ENCODE measurements at regions of chr11 and their contacts with region 1.

Region 1: GRCh38 chr11:130861902-130862860 is 54.1 kb downstream of the SNX19 start:
- DNase-seq: peak; percentile 84
- H3K4me3 ChIP-seq: no peak overlapping the region
- H3K27ac ChIP-seq: no peak overlapping the region
- H3K4me1 ChIP-seq: no peaks in the 10 kb centered on the region
- H3K27me3 ChIP-seq: no peaks in the 10 kb centered on the region
- CTCF ChIP-seq: peak; percentile 100
- POLR2A ChIP-seq: no peak

Region 2: DNA sequence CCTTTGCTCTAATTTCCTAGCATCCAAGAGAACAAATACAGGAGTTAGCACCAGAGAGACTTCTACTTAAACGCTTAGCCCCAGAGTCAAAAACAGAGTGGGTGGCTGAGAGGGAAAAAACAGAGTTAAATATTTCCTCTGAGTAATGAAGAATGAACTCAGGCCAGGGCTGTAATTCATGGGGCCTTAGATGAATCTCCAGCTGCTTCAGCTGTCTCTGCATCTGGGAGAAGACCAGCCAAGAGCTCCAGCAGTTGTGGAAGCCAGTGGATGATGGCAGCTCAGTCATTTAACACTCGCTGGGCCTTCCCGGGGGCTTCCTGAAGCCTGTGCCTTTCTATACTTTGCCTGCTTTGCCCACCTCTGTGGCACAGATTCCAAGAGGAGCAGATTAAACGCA is 419.4 kb before region 1 on chr11:
- CTCF ChIA-PET with region 1: interaction called, 464 read pairs
- POLR2A ChIA-PET with region 1: no interaction called
- dilution Hi-C with region 1: loop called (anchors 25 kb)
- intact Hi-C with region 1: no loop called
- DNase-seq: no peak
- H3K4me3 ChIP-seq: no peak overlapping the region
- H3K27ac ChIP-seq: no peak overlapping the region
- H3K4me1 ChIP-seq: no peaks in the 10 kb centered on the region
- H3K27me3 ChIP-seq: peaks cover 0 to 3% of the 10 kb centered on the region in 2 experiments
- CTCF ChIP-seq: no peak
- POLR2A ChIP-seq: no peak

Region 3: GRCh38 chr11:130480711-130481140 is 381.5 kb before region 1 on chr11:
- CTCF ChIA-PET with region 1: interaction called, 3 read pairs
- POLR2A ChIA-PET with region 1: no interaction called
- dilution Hi-C with region 1: no loop called
- intact Hi-C with region 1: loop called (anchors 5 kb)
- DNase-seq: peak; percentile 80
- H3K4me3 ChIP-seq: no peak overlapping the region
- H3K27ac ChIP-seq: no peak overlapping the region
- H3K4me1 ChIP-seq: peaks cover 28% of the 10 kb centered on the region
- H3K27me3 ChIP-seq: peaks cover 23 to 38% of the 10 kb centered on the region in 2 experiments
- CTCF ChIP-seq: no peak
- POLR2A ChIP-seq: no peak

Region 4: DNA sequence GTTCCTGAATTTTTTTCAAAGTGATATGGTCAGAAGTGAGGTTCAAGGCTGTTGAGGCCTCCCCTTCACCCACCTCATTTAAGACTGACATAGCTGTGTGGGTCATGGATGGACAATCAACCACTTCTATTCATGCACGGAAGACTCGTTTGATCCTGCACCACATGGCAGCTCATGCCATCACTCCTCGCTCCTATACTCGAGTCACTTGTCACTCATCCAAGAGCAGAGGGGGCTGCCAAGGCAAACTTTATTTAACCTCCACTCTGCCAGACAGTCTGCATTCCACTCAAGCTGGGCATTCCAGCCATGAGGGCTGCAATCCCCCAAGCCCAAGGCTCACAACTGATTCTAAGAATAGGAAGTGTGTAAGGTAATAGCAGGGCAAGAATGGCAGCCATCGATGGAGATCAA is 20.0 kb after region 1 on chr11:
- CTCF ChIA-PET with region 1: interaction called, 13 read pairs
- POLR2A ChIA-PET with region 1: no interaction called
- dilution Hi-C with region 1: no loop called
- intact Hi-C with region 1: no loop called
- DNase-seq: peak; percentile 63
- H3K4me3 ChIP-seq: no peak overlapping the region
- H3K27ac ChIP-seq: peak overlapping the region; percentile 9
- H3K4me1 ChIP-seq: peaks cover 22% of the 10 kb centered on the region
- H3K27me3 ChIP-seq: no peaks in the 10 kb centered on the region
- CTCF ChIP-seq: no peak
- POLR2A ChIP-seq: no peak

Region 5: GRCh38 chr11:130916238-130916855 is 54.2 kb after region 1 on chr11 and contains the start of gene SNX19:
- CTCF ChIA-PET with region 1: interaction called, 17 read pairs
- POLR2A ChIA-PET with region 1: no interaction called
- dilution Hi-C with region 1: no loop called
- intact Hi-C with region 1: no loop called
- DNase-seq: peak; percentile 92
- H3K4me3 ChIP-seq: peak within 1 kb of the TSS; percentile 34 to 87 (median 51)
- H3K27ac ChIP-seq: peak within 1 kb of the TSS; percentile 76
- H3K4me1 ChIP-seq: peaks cover 12% of the 10 kb centered on the region
- H3K27me3 ChIP-seq: peaks cover 3 to 4% of the 10 kb centered on the region in 2 experiments
- CTCF ChIP-seq: peak; percentile 91 to 97
- POLR2A ChIP-seq: peak; percentile 89
- total RNA-seq, gene SNX19: 44.3 and 49.8 TPM in 2 replicates

Region 6: GRCh38 chr11:130932086-130932712 is 70.0 kb after region 1 on chr11:
- CTCF ChIA-PET with region 1: no interaction called
- POLR2A ChIA-PET with region 1: no interaction called
- dilution Hi-C with region 1: no loop called
- intact Hi-C with region 1: no loop called
- DNase-seq: no peak
- H3K4me3 ChIP-seq: no peak overlapping the region
- H3K27ac ChIP-seq: no peak overlapping the region
- H3K4me1 ChIP-seq: no peaks in the 10 kb centered on the region
- H3K27me3 ChIP-seq: no peaks in the 10 kb centered on the region
- CTCF ChIP-seq: no peak
- POLR2A ChIP-seq: no peak